Posterior vena cava (tissue), 2 donors: ENCODE measurements at regions of chr1 and their contacts with region 1.

Region 1: DNA sequence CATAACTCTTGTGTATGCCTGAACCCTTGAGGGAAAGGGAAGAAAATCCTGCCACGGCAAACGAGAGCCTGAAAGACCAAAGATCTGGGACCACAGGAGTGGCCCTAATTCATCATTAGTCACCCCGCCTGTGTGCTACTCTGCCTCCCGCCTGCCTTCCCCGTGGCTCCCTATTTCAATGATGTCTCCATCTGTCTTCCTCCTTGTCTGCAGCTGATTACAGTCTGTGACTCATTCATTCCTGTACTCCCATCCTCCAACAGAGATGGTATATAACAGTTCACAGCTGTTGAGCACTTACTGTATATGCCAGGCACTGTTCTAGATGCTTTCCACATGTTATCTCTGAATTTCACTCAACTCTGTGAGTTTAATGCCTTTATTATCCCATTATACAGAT is 96.6 kb downstream of the SEC16B start:
- DNase-seq: no peak

Region 2: DNA sequence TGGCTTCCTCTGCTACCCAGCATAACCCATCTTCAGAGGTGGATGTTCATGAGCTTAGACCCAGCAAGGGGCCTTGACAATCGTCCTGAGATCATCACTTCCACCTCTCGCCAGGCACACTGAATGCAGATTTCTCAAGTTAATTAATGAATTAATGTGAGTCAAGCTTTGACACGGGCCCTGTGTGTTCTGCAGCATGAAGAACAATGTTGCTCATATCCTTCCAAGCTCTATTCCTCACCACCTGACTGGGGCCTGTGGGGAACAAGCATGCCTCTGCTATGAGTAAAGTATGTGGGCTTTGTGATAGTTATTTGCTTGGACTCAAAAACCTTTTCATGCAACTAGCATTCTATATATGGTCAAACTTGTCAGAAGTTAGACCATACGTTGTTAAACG is 25.4 kb before region 1 on chr1:
- intact Hi-C with region 1: loop called in 1 of 2 experiments (anchors 1 kb)
- DNase-seq: no peak

Region 3: DNA sequence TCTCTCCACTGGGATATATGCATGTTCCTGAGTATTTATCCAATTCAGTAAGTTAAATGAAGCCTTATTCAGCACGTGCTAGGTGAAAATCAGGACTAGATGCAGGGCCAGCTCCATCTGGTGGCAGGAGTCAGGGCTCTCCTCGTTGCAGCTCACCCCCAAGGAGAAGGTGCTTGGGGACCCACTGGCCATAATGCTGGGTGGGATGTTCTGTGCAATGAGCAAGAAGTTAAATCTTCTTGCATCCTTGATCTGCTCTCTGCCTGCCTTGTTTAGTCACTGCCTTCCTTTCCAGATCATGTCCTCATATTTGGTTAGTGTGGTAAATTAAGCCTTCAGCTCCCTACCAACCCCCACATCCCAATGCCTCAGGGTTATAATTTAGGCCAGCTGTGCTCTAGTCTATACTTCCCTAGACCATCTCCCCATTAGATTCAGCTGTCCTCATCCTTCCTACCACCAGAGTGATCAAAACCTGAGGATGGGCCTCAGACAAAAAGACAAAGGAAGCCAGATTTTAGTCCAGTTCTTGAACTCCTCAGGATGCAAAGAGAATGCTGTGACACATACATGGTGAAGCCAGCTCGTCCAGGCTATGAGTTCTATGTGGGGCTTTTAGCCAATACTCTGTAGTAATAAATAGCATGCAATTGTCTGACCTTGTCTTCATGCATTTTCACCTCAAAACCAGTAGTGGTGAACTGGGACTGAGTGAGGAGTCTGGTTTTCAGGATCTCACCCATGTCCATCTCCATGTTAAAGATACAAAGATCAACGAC is 40.7 kb after region 1 on chr1:
- intact Hi-C with region 1: no loop called
- DNase-seq: no peak

Region 4: DNA sequence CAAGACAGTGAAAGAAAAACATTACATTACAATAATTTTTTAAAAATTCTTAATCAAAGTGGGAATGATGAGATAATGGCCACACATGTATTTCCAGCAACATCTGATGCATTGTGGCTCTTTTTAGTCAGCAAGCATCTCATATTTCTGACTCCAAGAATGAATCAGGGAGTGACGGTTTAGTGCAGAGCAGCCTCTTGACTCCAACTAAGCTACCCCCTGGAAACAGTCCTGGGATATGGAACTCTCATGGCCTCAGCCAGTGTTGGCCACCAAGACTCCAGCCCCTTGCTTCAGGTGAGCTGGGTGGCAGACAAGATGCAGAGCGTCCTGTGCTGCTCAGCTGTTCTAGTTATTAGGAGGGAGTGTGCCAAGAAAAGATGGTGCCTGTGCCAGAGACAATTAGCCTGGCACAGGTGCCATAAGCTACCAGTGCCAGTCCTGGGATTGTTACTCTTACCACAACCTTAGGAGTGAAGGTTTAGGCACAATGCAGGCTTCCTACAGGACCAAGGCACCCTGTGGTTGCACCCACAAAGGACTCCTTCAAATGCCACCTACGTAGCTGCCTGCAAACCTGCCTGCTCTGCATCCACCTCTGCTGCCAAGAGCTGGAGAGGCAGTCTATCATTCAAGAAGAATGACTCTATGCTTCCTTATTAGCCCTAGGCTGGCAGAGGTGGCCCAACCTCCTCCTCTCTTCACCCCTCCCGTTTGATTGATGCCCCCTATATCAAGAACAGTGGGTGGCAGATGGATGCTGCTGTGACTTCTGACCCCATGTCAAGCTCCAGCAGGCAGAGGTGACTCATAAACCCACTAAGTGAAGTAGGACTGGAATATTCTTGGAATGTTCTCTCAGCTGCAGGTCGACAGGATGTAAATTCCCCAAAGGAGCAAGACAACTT is 102.6 kb after region 1 on chr1:
- intact Hi-C with region 1: no loop called
- DNase-seq: no peak